ENCODE measurements at regions of chr5 and their contacts with region 1.

Region 1: GRCh38 chr5:180606215-180606975 is 15.1 kb upstream of the SCGB3A1 start:
- DNase-seq: no peak
- ATAC-seq: no peak
- H3K4me3 ChIP-seq: no peak overlapping the region
- H3K27ac ChIP-seq: no peak overlapping the region
- H3K4me1 ChIP-seq: no peaks in the 10 kb centered on the region
- H3K27me3 ChIP-seq: no peaks in the 10 kb centered on the region
- CTCF ChIP-seq: peak; percentile 45

Region 2: DNA sequence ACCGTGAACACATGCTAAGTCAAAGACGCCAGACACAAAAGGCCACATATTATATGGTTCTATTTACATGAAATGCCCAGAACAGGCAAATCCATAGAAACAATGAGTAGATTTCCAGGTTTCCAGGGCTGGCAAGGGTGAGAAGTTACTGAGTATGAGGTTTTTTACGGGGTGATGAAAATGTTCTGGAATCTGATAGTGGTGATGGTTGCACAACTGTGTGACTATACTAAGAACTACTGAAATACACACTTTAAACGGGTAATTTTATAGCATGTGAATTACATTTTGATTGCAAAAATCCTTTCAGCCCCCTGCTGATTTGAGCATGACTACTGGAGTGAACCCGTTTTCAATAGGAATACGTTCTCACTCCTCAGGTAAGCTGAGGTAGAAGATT is 652.0 kb before region 1 on chr5:
- CTCF ChIA-PET with region 1: no interaction called
- POLR2A ChIA-PET with region 1: no interaction called
- in situ Hi-C with region 1: no loop called
- intact Hi-C with region 1: no loop called
- DNase-seq: no peak
- ATAC-seq: no peak
- H3K4me3 ChIP-seq: no peak overlapping the region
- H3K27ac ChIP-seq: no peak overlapping the region
- H3K4me1 ChIP-seq: no peaks in the 10 kb centered on the region
- H3K27me3 ChIP-seq: no peaks in the 10 kb centered on the region
- CTCF ChIP-seq: no peak

Region 3: GRCh38 chr5:180291943-180292831 is 314.2 kb before region 1 on chr5 and contains the start of gene MAPK9:
- CTCF ChIA-PET with region 1: interaction called, 10 read pairs
- POLR2A ChIA-PET with region 1: no interaction called
- in situ Hi-C with region 1: no loop called
- intact Hi-C with region 1: no loop called
- DNase-seq: no peak
- ATAC-seq: peak; percentile 94
- H3K4me3 ChIP-seq: peak within 1 kb of the TSS; percentile 69 to 84
- H3K27ac ChIP-seq: peak within 1 kb of the TSS; percentile 63; the same call in 1 of the 2 replicates
- H3K4me1 ChIP-seq: peaks cover 15% of the 10 kb centered on the region
- H3K27me3 ChIP-seq: no peaks in the 10 kb centered on the region
- CTCF ChIP-seq: no peak
- total RNA-seq, gene MAPK9: 44.1 TPM

Region 4: DNA sequence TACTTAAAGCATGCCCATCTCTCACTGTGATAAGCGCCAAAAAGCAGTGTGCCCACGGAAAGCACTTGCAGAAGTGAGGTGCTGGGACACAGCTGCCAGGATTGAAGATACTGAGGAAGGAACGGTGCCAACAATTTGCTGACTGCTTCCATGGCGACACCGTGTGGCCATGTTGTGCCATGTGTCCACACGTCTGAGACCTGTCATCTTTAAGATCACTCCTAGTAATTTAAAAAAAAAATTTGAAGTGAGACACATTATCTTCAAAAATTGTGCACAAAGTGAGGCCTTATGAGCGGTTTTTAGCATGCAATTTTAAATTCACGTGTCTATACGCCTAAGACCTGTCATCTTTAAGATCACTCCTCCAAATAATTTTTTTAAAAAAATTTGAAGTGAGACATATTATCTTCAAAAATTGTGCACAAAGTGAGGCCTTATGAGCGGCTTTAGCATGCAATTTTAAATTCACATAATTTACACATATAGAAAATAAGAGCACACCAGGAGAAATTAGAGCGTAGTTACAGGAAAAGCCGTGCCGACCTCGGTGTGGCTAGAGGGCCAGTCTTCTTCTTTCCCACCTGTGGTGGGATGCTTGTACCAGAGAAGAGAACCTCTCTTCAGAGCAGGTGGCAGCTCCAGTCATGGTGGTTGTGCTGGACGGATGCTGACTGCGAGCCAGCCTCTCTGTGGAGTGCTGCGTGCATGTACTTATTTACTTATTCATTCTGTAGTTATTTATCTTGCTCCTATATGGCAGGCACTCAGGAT is 64.4 kb after region 1 on chr5:
- CTCF ChIA-PET with region 1: interaction called, 9 read pairs
- POLR2A ChIA-PET with region 1: no interaction called
- in situ Hi-C with region 1: no loop called
- intact Hi-C with region 1: loop called (anchors 5 kb)
- DNase-seq: peak; percentile 36
- ATAC-seq: peak; percentile 73
- H3K4me3 ChIP-seq: no peak overlapping the region
- H3K27ac ChIP-seq: no peak overlapping the region
- H3K4me1 ChIP-seq: peaks cover 5% of the 10 kb centered on the region
- H3K27me3 ChIP-seq: no peaks in the 10 kb centered on the region; the same call in 1 of the 2 replicates
- CTCF ChIP-seq: peak; percentile 91

Region 5: DNA sequence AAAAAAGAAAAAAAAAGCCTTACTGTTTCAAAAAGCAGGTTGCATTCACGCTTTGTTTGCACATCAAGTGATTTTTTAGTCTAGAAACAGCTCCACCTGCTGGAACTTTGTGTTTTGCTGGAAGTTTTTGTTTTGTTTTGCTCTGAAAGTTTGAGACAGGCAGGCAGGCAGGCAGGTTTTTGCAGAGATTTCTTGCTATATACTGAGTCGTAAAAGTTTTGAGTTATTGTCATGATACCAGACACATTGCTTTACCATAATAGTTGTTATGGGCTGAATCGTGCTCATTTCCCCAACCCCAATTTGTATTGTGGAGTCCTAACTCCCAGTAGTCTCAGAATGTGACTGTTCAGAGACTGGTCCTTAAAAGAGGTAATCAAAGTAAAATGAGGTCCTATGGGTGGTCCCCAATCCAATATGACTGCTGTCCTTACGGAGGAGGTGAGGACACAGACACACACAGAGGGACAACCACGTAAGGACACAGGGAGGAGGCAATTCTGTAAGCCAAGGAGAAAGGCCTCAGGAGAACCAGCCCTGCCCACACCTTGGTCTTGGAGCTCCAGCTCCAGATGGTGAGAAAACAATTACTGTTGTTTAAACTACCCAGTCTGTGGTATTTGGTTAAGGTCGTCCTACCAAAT is 112.5 kb after region 1 on chr5:
- CTCF ChIA-PET with region 1: interaction called, 16 read pairs
- POLR2A ChIA-PET with region 1: no interaction called
- in situ Hi-C with region 1: no loop called
- intact Hi-C with region 1: loop called (anchors 2 kb)
- DNase-seq: peak; percentile 36
- ATAC-seq: no peak; the same call in 1 of the 2 replicates
- H3K4me3 ChIP-seq: no peak overlapping the region
- H3K27ac ChIP-seq: no peak overlapping the region
- H3K4me1 ChIP-seq: no peaks in the 10 kb centered on the region
- H3K27me3 ChIP-seq: peaks cover 31% of the 10 kb centered on the region
- CTCF ChIP-seq: peak; percentile 82

Region 6: DNA sequence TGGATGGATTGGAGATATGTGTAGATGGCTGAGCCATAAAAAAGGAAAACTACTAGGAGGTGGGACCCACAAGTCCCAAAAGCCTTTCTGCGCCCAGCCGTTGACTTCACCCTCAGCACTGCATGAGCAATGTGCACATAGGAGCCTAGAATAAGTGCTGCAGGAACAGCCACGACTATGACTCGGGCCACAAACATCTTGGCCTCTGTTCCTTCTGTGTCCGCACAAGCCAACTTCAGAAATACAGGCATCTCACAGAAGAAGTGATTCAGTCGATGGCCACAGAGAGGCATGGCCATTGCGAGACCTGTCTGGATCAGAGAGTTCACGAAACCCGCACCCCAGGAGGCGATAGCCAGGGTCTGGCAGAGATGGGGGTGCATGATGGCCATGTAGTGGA is 132.9 kb after region 1 on chr5:
- CTCF ChIA-PET with region 1: interaction called, 10 read pairs
- POLR2A ChIA-PET with region 1: no interaction called
- in situ Hi-C with region 1: no loop called
- intact Hi-C with region 1: no loop called
- DNase-seq: no peak
- ATAC-seq: no peak
- H3K4me3 ChIP-seq: no peak overlapping the region
- H3K27ac ChIP-seq: no peak overlapping the region
- H3K4me1 ChIP-seq: no peaks in the 10 kb centered on the region
- H3K27me3 ChIP-seq: peaks cover 44% of the 10 kb centered on the region
- CTCF ChIP-seq: no peak

Region 7: DNA sequence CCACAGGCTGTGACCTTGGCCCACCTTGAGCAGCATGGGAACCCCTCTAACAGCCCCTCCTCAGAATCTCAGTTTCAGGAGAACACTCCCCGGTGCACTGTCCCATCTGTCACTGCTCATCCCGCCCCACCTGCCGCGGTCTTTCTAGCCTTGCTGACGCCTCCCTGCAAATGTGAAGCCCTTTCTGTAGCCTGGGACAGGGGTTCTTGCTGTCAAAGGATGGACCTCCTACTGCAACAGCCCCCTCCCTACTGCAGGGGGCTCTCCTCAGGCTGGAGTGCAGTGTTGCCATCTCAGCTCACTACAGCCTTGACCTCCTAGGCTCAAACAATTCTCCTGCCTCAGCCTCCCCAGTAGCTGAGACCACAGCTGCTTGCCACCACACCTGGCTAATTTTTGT is 504.6 kb after region 1 on chr5:
- CTCF ChIA-PET with region 1: interaction called, 10 read pairs
- POLR2A ChIA-PET with region 1: no interaction called
- in situ Hi-C with region 1: no loop called
- intact Hi-C with region 1: no loop called
- DNase-seq: no peak
- ATAC-seq: no peak
- H3K4me3 ChIP-seq: no peak overlapping the region
- H3K27ac ChIP-seq: peak overlapping the region; percentile 6; the same call in 1 of the 2 replicates
- H3K4me1 ChIP-seq: peaks cover 18% of the 10 kb centered on the region
- H3K27me3 ChIP-seq: no peaks in the 10 kb centered on the region
- CTCF ChIP-seq: no peak

Measured in Panc1 (cell line).